PC-9 (cell line): ENCODE measurements at regions of chr9 and their contacts with region 1.

Region 1: DNA sequence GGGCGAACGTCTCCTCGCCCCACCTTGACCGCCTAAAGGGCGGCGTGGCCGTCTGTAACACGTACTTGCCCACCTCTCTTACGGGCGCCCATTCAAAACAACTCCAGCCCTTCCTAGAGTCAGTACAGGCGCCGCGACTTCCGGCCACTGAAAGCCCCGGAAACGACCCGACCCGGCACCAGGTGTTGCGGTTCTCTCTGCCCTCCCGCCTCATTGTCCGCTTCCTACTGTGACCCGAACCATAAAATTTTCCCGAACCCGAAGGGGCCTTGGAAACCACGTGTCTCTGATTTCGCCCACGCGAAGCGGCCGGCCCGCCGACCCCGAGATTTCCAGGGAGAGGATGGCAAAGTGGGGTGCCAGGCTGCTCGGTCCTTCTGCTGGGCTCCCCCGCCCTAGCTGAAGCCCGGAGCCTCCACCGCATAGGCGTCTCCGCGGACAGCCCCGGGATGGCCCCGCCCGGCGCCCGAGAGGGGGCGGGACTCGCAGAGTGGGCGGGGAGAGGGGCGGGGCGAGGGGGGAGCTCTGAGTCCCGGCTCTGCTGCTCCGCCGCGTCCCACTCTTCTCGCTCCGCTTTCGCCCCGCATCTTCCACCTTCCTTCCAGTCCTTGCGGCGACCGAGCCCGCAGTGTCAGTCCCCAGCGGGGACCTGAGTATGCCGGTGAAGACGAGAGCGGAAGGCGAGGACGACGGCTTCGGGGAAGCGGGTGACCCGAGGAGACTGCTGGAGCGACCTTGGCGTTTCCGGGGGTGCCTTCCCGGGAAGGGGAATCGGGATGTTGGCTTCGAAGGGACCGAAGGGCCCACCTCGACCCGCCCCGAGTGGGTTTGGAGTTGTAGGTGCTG is 684 bp upstream of the PTGES2 start:
- DNase-seq: peak; percentile 77 to 92
- H3K4me3 ChIP-seq: peak overlapping the region; percentile 86
- H3K27ac ChIP-seq: peak overlapping the region; percentile 66
- H3K4me1 ChIP-seq: peaks cover 22% of the 10 kb centered on the region
- H3K27me3 ChIP-seq: no peaks in the 10 kb centered on the region
- CTCF ChIP-seq: no peak

Region 2: GRCh38 chr9:127877566-127877998 is 250.6 kb before region 1 on chr9 and contains the start of gene AK1:
- CTCF ChIA-PET with region 1: no interaction called
- POLR2A ChIA-PET with region 1: no interaction called
- intact Hi-C with region 1: no loop called
- DNase-seq: peak in 1 of 2 experiments; percentile 74
- H3K4me3 ChIP-seq: peak within 1 kb of the TSS; percentile 62
- H3K27ac ChIP-seq: no peak within 1 kb of the TSS
- H3K4me1 ChIP-seq: peaks cover 19% of the 10 kb centered on the region; the same call in 1 of the 2 replicates
- H3K27me3 ChIP-seq: no peaks in the 10 kb centered on the region
- CTCF ChIP-seq: no peak
- total RNA-seq, gene AK1: 84.5 and 86.8 TPM in 2 replicates

Region 3: DNA sequence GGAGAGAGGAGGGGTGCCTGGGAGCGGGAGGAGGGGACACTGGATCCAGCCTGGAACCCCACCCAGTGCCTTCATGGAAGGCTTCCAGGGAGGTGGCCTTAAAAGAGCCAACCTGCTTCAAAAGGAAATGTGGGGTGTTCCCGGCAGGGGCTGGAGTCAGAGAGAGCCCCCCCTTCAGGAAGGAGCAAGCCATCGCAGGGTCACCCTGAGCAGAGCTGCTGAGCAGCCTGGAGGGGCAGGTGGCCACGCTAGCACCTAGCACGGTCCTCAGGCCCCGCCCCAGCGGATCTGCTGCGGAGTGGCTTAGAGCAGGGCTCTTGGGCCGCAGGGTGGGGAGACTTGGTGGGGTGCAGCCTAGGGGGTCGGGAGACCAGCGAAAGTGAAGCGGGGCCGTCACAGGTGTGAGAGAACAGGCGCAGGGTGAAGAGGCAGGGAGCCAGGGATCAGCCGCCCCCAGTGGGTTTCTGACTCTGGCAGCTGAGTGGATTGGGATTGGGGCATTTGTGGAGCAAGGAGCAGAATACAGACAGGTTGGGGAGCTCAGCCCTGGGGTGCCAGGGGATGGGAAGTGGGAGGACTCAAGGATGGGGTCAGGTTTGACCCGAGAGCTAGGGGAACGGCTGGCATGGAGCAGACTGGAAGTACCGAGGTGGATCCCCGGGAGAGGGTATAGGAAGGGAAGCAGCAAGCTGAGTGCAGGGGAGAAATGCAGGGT is 22.5 kb after region 1 on chr9:
- CTCF ChIA-PET with region 1: interaction called, 3 read pairs
- POLR2A ChIA-PET with region 1: interaction called, 14 read pairs
- intact Hi-C with region 1: loop called (anchors 1 kb)
- DNase-seq: peak; percentile 79 to 94
- H3K4me3 ChIP-seq: peak overlapping the region; percentile 97
- H3K27ac ChIP-seq: peak overlapping the region; percentile 99
- H3K4me1 ChIP-seq: peaks cover 44% of the 10 kb centered on the region
- H3K27me3 ChIP-seq: no peaks in the 10 kb centered on the region
- CTCF ChIP-seq: peak; percentile 64

Region 4: GRCh38 chr9:128175102-128175563 is 46.9 kb after region 1 on chr9:
- CTCF ChIA-PET with region 1: no interaction called
- POLR2A ChIA-PET with region 1: interaction called, 11 read pairs
- intact Hi-C with region 1: no loop called
- DNase-seq: no peak
- H3K4me3 ChIP-seq: no peak overlapping the region
- H3K27ac ChIP-seq: no peak overlapping the region
- H3K4me1 ChIP-seq: peaks cover 18% of the 10 kb centered on the region
- H3K27me3 ChIP-seq: no peaks in the 10 kb centered on the region
- CTCF ChIP-seq: no peak

Region 5: GRCh38 chr9:128254855-128255759 is 126.9 kb after region 1 on chr9:
- CTCF ChIA-PET with region 1: interaction called, 3 read pairs
- POLR2A ChIA-PET with region 1: no interaction called
- intact Hi-C with region 1: loop called (anchors 2 kb)
- DNase-seq: peak in 1 of 2 experiments; percentile 68
- H3K4me3 ChIP-seq: no peak overlapping the region
- H3K27ac ChIP-seq: no peak overlapping the region
- H3K4me1 ChIP-seq: no peaks in the 10 kb centered on the region
- H3K27me3 ChIP-seq: no peaks in the 10 kb centered on the region
- CTCF ChIP-seq: peak; percentile 93

Region 6: GRCh38 chr9:128339771-128340690 is 211.8 kb after region 1 on chr9 and contains the start of gene SLC27A4:
- CTCF ChIA-PET with region 1: interaction called, 9 read pairs
- POLR2A ChIA-PET with region 1: no interaction called
- intact Hi-C with region 1: loop called (anchors 5 kb)
- DNase-seq: peak; percentile 79 to 92
- H3K4me3 ChIP-seq: peak within 1 kb of the TSS; percentile 85
- H3K27ac ChIP-seq: peak within 1 kb of the TSS; percentile 68
- H3K4me1 ChIP-seq: peaks cover 9% of the 10 kb centered on the region; the same call in 1 of the 2 replicates
- H3K27me3 ChIP-seq: no peaks in the 10 kb centered on the region
- CTCF ChIP-seq: no peak
- total RNA-seq, gene SLC27A4: 27.3 and 30.4 TPM in 2 replicates